PC-9 (cell line): ENCODE measurements at regions of chr6 and their contacts with region 1.

Region 1: GRCh38 chr6:16409531-16410441 is 171.4 kb downstream of the GMPR start:
- DNase-seq: no peak
- H3K4me3 ChIP-seq: no peak overlapping the region
- H3K27ac ChIP-seq: no peak overlapping the region
- H3K4me1 ChIP-seq: no peaks in the 10 kb centered on the region
- H3K27me3 ChIP-seq: no peaks in the 10 kb centered on the region
- CTCF ChIP-seq: peak; percentile 66

Region 2: DNA sequence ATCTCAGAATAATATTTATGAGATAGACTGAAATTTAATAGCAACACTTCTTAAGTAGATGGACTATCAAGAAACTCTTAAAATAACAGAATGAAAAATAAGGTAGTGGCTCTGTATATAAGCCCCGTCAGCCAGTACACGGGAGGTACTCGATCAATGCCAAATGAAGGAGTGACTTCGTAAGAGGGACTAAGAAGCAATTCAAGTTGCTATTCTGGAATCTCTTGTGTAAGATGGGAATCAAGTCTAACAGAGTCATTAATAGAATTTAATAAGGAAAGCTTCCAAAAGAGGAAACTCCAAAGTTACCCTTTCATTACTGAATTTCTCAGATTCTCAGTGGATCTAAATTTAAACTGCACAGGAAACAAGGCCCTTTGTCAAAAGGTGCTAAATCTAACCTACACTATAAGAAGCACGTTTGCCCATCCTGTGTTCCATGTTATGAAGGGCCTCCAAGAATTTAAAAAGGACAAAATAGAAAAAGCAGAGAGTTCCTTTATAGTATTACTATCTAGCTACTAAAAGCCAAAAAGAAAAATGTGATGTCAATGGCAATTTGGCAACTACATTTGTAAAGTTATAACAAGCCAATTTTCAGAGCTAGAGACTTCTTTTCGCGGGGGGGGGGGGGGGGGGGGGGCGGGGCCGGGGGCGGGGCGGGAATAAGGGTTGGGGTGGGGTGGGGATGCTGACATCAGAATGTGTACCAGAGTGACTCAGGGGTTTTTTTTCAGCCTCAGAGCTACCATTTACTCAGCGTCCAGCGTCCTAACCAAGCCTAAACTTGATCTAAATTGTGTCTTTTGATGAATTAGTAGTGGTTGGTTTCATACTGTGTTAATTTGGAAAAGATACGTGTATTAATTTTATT is 29.2 kb after region 1 on chr6:
- CTCF ChIA-PET with region 1: no interaction called
- POLR2A ChIA-PET with region 1: interaction called, 10 read pairs
- intact Hi-C with region 1: no loop called
- DNase-seq: peak in 1 of 2 experiments; percentile 25
- H3K4me3 ChIP-seq: no peak overlapping the region
- H3K27ac ChIP-seq: peak overlapping the region; percentile 62
- H3K4me1 ChIP-seq: peaks cover 6% of the 10 kb centered on the region
- H3K27me3 ChIP-seq: no peaks in the 10 kb centered on the region
- CTCF ChIP-seq: no peak

Region 3: DNA sequence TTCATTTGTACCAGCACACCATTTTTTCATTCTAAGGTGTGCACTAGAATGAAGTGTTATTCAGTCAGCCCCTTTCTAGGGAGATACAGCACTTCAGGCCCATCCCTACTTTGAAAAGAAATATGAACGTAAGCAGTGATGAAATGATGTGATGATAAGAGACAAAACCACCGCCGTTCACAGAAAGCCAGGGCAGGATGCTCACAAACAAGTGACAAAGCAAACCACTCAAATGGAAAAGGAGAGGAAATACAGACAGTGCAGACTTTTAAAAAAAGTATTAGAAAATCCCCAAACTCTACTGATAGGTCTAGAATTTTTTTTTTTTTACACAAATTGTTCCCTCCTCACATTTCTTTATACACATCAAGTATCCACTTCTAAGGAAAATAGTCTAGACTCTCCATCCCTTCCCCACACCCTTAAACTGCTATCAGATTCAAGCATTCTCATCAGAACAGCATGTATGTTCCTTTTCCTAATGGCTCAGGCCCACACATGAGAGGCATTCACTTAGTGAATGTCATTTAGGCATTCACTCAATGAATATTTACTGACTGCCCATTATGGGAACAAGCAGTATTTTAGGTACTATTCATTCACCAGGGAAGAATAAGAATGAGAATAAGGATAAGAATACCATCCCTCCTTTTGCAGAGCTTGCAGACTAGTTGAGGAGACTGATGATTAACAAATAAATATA is 72.1 kb after region 1 on chr6:
- CTCF ChIA-PET with region 1: no interaction called
- POLR2A ChIA-PET with region 1: no interaction called
- intact Hi-C with region 1: no loop called
- DNase-seq: no peak
- H3K4me3 ChIP-seq: no peak overlapping the region
- H3K27ac ChIP-seq: no peak overlapping the region
- H3K4me1 ChIP-seq: no peaks in the 10 kb centered on the region
- H3K27me3 ChIP-seq: no peaks in the 10 kb centered on the region
- CTCF ChIP-seq: no peak

Region 4: GRCh38 chr6:16540804-16541752 is 131.3 kb after region 1 on chr6:
- CTCF ChIA-PET with region 1: no interaction called
- POLR2A ChIA-PET with region 1: no interaction called
- intact Hi-C with region 1: no loop called
- DNase-seq: no peak
- H3K4me3 ChIP-seq: no peak overlapping the region
- H3K27ac ChIP-seq: no peak overlapping the region
- H3K4me1 ChIP-seq: peaks cover 8% of the 10 kb centered on the region; the same call in 1 of the 2 replicates
- H3K27me3 ChIP-seq: no peaks in the 10 kb centered on the region
- CTCF ChIP-seq: no peak